Endothelial cell of umbilical vein (primary cell): ENCODE measurements at regions of chr19 and their contacts with region 1.

Region 1: GRCh38 chr19:42244347-42245220 is 2.2 kb upstream of the GSK3A start:
- DNase-seq: peak; percentile 96
- H3K4me3 ChIP-seq: peak overlapping the region; percentile 49 to 71 (median 69)
- H3K27ac ChIP-seq: peak overlapping the region; percentile 67
- H3K4me1 ChIP-seq: peaks cover 30% of the 10 kb centered on the region
- H3K27me3 ChIP-seq: no peaks in the 10 kb centered on the region
- CTCF ChIP-seq: peak; percentile 57 to 72
- POLR2A ChIP-seq: no peak

Region 2: GRCh38 chr19:41993612-41994483 is 250.7 kb before region 1 on chr19 and contains the start of gene ATP1A3:
- CTCF ChIA-PET with region 1: no interaction called
- POLR2A ChIA-PET with region 1: no interaction called
- dilution Hi-C with region 1: no loop called
- intact Hi-C with region 1: no loop called
- DNase-seq: peak; percentile 39
- H3K4me3 ChIP-seq: peak within 1 kb of the TSS in 1 of 3 experiments; percentile 21
- H3K27ac ChIP-seq: no peak within 1 kb of the TSS
- H3K4me1 ChIP-seq: no peaks in the 10 kb centered on the region
- H3K27me3 ChIP-seq: peaks cover 6 to 20% of the 10 kb centered on the region in 2 experiments
- CTCF ChIP-seq: no peak
- POLR2A ChIP-seq: no peak
- total RNA-seq, gene ATP1A3: 0.40 TPM in 1 of 2 replicates, not detected in the other

Region 3: GRCh38 chr19:42108527-42109389 is 135.8 kb before region 1 on chr19:
- CTCF ChIA-PET with region 1: interaction called, 19 read pairs
- POLR2A ChIA-PET with region 1: no interaction called
- dilution Hi-C with region 1: no loop called
- intact Hi-C with region 1: loop called (anchors 1 kb)
- DNase-seq: peak; percentile 90
- H3K4me3 ChIP-seq: no peak overlapping the region
- H3K27ac ChIP-seq: no peak overlapping the region
- H3K4me1 ChIP-seq: peaks cover 20% of the 10 kb centered on the region
- H3K27me3 ChIP-seq: peaks cover 3% of the 10 kb centered on the region in 2 experiments
- CTCF ChIP-seq: peak; percentile 99 to 100
- POLR2A ChIP-seq: no peak

Region 4: GRCh38 chr19:42132851-42133528 is 111.6 kb before region 1 on chr19:
- CTCF ChIA-PET with region 1: interaction called, 10 read pairs
- POLR2A ChIA-PET with region 1: no interaction called
- dilution Hi-C with region 1: no loop called
- intact Hi-C with region 1: loop called (anchors 1 kb)
- DNase-seq: peak; percentile 45
- H3K4me3 ChIP-seq: peak overlapping the region in 1 of 3 experiments; percentile 23
- H3K27ac ChIP-seq: no peak overlapping the region
- H3K4me1 ChIP-seq: peaks cover 6% of the 10 kb centered on the region
- H3K27me3 ChIP-seq: no peaks in the 10 kb centered on the region
- CTCF ChIP-seq: peak; percentile 83 to 99
- POLR2A ChIP-seq: no peak

Region 5: GRCh38 chr19:42254989-42255765 is 10.6 kb after region 1 on chr19 and contains the start of gene ERF:
- CTCF ChIA-PET with region 1: interaction called, 21 read pairs
- POLR2A ChIA-PET with region 1: interaction called, 9 read pairs
- dilution Hi-C with region 1: no loop called
- intact Hi-C with region 1: loop called (anchors 1 kb)
- DNase-seq: peak; percentile 93
- H3K4me3 ChIP-seq: peak within 1 kb of the TSS; percentile 83 to 98 (median 94)
- H3K27ac ChIP-seq: peak within 1 kb of the TSS; percentile 79
- H3K4me1 ChIP-seq: peaks cover 30% of the 10 kb centered on the region
- H3K27me3 ChIP-seq: no peaks in the 10 kb centered on the region
- CTCF ChIP-seq: no peak
- POLR2A ChIP-seq: peak; percentile 86
- total RNA-seq, gene ERF: 117 and 130 TPM in 2 replicates

Region 6: GRCh38 chr19:42283143-42284065 is 38.8 kb after region 1 on chr19:
- CTCF ChIA-PET with region 1: interaction called, 365 read pairs
- POLR2A ChIA-PET with region 1: interaction called, 11 read pairs
- dilution Hi-C with region 1: no loop called
- intact Hi-C with region 1: loop called (anchors 1 kb)
- DNase-seq: peak; percentile 95
- H3K4me3 ChIP-seq: peak overlapping the region in 2 of 3 experiments; percentile 3 to 35
- H3K27ac ChIP-seq: no peak overlapping the region
- H3K4me1 ChIP-seq: peaks cover 53% of the 10 kb centered on the region
- H3K27me3 ChIP-seq: no peaks in the 10 kb centered on the region
- CTCF ChIP-seq: no peak
- POLR2A ChIP-seq: no peak

Region 7: DNA sequence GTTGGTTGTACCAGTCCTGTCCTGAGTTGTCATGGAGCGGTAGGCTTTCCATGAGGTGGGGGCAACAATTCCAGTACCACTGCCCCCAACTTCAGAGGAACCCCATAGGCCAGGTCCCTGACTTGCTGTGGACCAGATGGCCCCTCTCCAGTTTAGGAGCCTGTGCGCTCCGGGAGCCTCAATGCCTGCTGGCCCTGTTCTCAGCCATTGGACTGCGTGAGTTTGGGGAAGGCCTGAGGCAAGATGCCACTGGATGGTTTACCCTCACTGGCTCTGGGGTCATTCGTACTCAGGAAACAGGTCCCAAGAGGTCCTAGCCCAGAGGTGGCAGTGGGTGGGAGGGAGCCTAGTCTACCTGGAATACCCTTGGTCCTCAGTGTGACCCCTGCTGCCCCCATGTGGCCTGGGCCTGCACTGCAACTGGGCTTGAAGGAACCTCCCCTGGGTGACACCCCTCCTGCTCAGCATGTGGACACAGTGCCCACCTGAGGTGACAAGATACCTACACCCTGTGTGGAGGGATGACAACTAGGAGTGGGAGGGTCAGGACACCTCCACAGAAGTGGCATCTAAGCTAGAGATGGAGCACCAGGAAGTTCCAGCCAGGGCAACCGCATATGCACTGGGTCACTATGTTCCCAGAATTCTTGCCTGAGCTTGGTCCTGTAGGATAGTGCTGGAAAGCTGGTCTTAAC is 51.4 kb after region 1 on chr19:
- CTCF ChIA-PET with region 1: interaction called, 60 read pairs
- POLR2A ChIA-PET with region 1: interaction called, 6 read pairs
- dilution Hi-C with region 1: no loop called
- intact Hi-C with region 1: loop called (anchors 1 kb)
- DNase-seq: peak; percentile 72
- H3K4me3 ChIP-seq: no peak overlapping the region
- H3K27ac ChIP-seq: no peak overlapping the region
- H3K4me1 ChIP-seq: no peaks in the 10 kb centered on the region
- H3K27me3 ChIP-seq: no peaks in the 10 kb centered on the region
- CTCF ChIP-seq: peak; percentile 92 to 97
- POLR2A ChIP-seq: no peak

Region 8: DNA sequence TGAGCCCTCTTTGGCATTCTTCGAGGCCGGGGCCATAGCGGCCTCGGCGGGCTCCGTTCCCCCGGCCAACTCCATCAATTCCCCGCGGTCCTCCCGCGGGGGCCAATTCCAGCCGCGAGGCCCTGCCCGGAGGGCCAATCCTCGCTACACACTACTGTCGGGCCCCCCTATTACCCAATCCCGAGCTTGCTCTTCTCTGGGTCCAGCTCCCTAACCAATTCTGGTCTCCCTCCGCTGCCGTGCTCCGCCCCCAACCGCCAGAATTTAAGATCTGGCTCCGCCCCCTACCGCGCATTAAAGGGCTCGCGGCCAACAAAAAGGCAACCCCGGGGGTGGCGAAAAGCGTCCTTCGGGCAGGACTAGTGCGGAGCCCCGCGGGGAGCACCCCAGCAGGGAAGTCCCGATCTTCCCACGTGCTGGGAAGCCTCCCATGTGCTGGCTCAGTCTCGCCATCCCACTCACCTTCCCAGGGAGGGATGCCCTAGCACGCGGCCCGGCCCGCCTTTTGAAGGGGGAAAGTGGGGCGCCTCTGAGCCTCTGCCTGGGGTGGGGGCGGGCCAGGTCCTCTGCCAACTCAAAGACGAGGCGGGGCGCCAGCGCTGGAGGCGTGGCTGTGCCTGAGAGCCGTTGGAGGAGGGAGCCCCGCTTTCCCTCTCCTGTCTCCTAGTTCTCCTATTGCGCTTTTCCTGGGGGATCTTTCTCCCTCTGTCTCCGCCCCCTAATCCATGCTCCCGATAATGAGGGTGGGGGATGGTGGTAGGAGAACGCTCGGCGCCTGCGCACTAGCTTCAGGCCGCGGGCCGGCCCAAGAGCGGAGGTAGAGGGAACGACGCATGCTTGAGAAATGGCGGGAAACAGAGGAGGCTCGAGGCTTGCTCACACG is 179.1 kb after region 1 on chr19:
- CTCF ChIA-PET with region 1: no interaction called
- POLR2A ChIA-PET with region 1: interaction called, 3 read pairs
- dilution Hi-C with region 1: no loop called
- intact Hi-C with region 1: loop called (anchors 1 kb)
- DNase-seq: peak; percentile 88
- H3K4me3 ChIP-seq: peak overlapping the region; percentile 25 to 52 (median 49)
- H3K27ac ChIP-seq: peak overlapping the region; percentile 55
- H3K4me1 ChIP-seq: peaks cover 29% of the 10 kb centered on the region
- H3K27me3 ChIP-seq: no peaks in the 10 kb centered on the region
- CTCF ChIP-seq: no peak
- POLR2A ChIP-seq: no peak